G401 (cell line): ENCODE measurements at regions of chr1 and their contacts with region 1.

Region 1: DNA sequence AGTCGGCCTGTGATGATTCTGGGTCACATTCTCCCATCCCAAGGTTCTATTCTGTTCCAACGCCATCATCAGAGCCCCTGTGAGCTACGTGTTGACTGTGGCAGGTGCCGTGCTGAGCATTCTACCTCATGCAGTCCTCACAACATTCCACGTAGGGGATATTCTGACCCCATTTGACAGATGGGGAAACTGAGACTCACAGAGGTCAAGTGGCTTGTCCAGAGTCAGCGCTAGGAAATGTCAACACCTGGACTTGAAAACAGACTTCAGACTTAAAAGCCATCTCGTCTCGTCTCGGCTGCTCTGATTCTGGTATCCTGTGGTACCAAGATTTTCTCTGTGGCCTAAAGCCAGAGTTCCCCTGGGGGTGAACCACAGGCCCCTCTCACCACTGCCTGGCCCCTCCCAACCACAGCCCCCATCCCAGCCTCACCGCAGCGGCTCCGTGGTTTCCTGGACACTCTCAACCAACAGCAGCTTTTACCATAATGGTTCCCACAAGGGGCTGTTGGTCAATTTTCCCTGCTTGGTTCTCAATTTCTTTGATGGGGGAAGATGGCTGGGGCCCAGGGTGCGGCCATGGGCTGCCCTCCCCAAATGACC is 39.6 kb downstream of the SDC3 start:
- DNase-seq: no peak

Region 2: GRCh38 chr1:30809514-30810263 is 59.2 kb before region 1 on chr1:
- in situ Hi-C with region 1: loop called (anchors 5 kb)
- DNase-seq: no peak

Region 3: DNA sequence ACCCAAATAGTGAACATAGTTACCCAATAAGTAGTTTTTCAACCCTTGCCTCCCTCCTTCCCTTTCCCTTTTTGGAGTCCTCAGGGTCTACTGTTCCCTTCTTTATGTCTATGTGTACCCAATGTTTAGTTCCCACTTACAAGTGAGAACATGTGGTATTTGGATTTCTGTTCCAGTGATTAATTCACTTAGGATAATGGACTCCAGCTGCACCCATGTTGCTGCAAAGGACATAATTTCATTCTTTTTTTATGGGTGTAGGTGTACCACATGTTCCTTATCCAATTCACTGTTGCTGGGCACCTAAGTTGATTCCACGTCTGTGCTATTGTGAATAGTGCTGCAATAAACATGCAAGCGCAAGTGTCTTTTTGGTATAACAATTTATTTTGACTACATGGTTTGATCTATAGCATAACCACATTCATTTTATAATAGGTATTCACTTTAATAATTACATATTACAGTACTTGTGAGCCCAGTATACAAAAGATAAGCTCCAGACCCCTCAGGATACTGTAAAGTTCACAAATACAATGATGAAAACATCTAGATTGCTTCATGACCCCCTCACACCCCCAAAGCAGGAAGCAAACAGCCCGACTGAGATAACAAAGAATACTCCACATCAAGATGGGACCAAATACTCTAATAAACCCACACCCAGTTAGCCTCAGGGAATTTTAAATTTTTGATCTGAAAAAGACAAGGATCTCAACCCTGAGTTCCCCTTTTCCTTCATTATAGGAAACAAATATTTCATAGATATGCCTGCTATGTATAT is 151.3 kb after region 1 on chr1:
- in situ Hi-C with region 1: no loop called
- DNase-seq: no peak